ENCODE measurements at regions of chr5 and their contacts with region 1.

Region 1: GRCh38 chr5:174418928-174419796 is 305.2 kb upstream of the MSX2 start:
- DNase-seq: peak; percentile 69
- H3K4me3 ChIP-seq: peak overlapping the region; percentile 1 to 33 (median 6)
- H3K27ac ChIP-seq: no peak overlapping the region
- H3K4me1 ChIP-seq: no peaks in the 10 kb centered on the region
- H3K27me3 ChIP-seq: no peaks in the 10 kb centered on the region
- CTCF ChIP-seq: peak; percentile 89 to 98

Region 2: DNA sequence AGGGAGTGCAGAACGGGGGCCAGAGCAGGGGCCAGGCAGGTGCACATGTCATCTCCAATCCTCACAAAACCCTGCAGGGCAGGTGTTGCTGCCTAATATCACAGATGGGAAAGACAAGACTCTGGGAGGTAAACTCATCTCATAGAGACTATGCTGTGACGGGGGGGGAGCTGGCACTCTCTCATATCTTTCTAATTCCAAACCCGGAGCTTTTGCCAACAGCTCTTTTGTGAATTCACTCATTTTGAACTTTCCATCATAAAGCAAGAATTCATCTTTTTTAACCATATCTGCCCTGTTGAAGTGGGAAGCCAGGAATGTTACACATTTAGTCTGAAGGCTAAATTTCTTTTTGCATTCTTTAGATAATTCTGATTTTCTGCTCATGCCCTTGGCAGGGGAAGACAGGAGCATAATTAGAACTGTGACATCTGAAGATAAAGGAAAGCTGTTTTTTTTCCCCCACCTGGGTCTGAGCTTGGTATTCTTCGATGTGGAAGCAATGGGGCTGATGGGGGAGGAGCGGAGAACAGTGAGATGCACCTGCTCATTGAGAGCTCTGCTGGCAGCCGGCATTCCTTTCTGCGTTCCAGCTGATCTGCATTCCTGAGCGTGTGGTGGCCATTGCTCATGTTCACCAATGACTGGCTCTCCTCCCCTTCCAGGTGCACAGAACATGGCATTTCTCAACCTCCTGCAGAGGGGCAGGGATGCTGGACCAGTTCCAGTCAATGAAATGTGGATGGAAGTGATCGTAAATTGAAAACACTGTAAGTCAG is 214.4 kb before region 1 on chr5:
- CTCF ChIA-PET with region 1: no interaction called
- dilution Hi-C with region 1: no loop called
- in situ Hi-C with region 1: no loop called
- intact Hi-C with region 1: no loop called
- DNase-seq: peak; percentile 1
- H3K4me3 ChIP-seq: no peak overlapping the region
- H3K27ac ChIP-seq: no peak overlapping the region
- H3K4me1 ChIP-seq: no peaks in the 10 kb centered on the region
- H3K27me3 ChIP-seq: no peaks in the 10 kb centered on the region
- CTCF ChIP-seq: no peak

Region 3: DNA sequence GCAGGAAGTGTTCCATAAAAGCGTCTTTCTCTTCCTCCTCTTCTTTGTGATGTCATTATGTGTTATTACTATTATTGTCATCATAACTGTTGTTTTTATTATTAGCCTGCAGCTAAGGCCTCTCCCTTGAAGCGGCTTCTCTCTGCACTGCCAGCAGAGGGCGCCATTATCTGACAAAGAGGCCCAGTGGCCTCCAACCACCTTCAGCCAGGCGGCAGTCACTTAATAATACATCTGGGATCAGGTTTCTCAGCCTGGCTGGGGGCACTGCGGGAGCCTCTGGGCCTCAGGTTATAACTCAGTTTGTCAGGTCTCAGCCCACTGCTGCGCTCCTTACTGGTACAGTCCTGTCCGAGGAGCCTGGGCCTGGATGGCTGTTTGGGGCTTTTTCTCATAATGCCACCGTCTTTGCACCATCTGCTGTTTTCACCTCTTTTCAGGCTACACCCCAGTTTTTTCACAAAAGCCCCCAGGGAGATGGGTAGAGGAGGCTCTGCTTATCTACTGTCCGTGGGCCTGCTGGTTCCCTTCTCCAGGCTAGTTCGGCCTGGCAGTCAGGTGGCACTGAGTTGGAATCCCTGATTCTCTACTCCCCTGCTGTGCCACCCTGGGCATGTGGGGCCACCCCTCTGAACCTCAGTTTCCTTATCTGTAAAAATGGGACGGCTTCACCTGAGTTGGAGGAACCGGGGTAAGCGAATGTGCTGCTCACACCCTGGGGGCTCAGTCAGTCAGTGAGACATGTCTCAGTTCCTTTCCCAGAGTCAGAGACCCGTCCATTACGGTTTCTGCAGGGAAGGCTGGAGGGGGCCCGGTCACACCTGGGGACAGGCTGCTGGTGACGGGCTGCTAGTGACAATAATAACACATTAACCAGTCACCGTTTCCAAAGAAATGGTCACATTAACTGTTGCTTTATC is 91.6 kb before region 1 on chr5:
- CTCF ChIA-PET with region 1: no interaction called
- dilution Hi-C with region 1: no loop called
- in situ Hi-C with region 1: no loop called
- intact Hi-C with region 1: loop called (anchors 1 kb)
- DNase-seq: peak; percentile 56
- H3K4me3 ChIP-seq: no peak overlapping the region
- H3K27ac ChIP-seq: no peak overlapping the region
- H3K4me1 ChIP-seq: no peaks in the 10 kb centered on the region
- H3K27me3 ChIP-seq: no peaks in the 10 kb centered on the region
- CTCF ChIP-seq: peak; percentile 85 to 90

Region 4: DNA sequence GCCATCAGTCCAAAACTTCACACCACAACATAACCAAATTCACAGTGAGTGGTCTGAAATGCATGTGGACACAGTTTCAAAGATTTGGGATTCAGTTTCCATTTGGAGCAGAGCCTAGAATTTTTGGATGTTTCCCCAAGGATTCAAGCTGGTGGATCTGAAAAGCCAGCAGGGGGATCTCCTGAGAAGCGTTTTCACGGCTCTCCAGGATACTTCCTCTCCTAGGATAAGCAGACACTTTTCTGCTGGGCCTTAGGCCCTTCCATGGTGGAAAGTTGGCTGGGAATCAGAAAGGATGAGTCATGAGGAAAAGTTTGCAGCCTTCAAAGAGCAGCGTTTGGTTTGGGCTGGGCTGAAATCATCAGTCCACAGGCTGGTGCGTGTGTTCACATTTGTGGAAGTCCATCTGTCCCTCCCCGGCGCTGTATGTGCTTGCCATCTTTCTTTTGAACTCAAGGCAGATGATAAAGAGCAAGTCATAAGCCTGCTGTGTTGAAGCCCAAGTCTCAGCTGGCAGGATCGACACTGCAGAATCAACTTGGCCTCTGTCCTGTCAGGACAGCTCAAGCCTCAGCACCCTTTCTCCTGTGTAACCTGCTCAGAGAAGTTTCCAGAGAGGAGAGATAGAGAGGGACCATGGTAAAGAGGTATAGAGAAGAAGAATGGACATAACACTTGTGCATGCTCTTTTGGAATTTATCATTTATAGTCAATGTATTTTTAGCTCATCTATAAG is 152.7 kb after region 1 on chr5:
- CTCF ChIA-PET with region 1: no interaction called
- dilution Hi-C with region 1: no loop called
- in situ Hi-C with region 1: no loop called
- intact Hi-C with region 1: no loop called
- DNase-seq: peak; percentile 85
- H3K4me3 ChIP-seq: no peak overlapping the region
- H3K27ac ChIP-seq: peak overlapping the region; percentile 19
- H3K4me1 ChIP-seq: peaks cover 28% of the 10 kb centered on the region
- H3K27me3 ChIP-seq: no peaks in the 10 kb centered on the region
- CTCF ChIP-seq: peak in 1 of 2 donors; percentile 25

Region 5: GRCh38 chr5:174724491-174725260 is 305.5 kb after region 1 on chr5 and contains the start of gene MSX2:
- CTCF ChIA-PET with region 1: no interaction called
- dilution Hi-C with region 1: no loop called
- in situ Hi-C with region 1: loop called in 1 of 2 experiments (anchors 5 kb)
- intact Hi-C with region 1: no loop called
- DNase-seq: peak; percentile 88
- H3K4me3 ChIP-seq: peak within 1 kb of the TSS; percentile 73 to 91 (median 74)
- H3K27ac ChIP-seq: peak within 1 kb of the TSS; percentile 3
- H3K4me1 ChIP-seq: peaks cover 6% of the 10 kb centered on the region
- H3K27me3 ChIP-seq: peaks cover 18% of the 10 kb centered on the region
- CTCF ChIP-seq: no peak
- total RNA-seq, gene MSX2: 2.0 to 3.3 TPM

Region 6: GRCh38 chr5:174735498-174736330 is 316.6 kb after region 1 on chr5:
- CTCF ChIA-PET with region 1: interaction called, 4 read pairs
- dilution Hi-C with region 1: no loop called
- in situ Hi-C with region 1: loop called in 1 of 2 experiments (anchors 5 kb)
- intact Hi-C with region 1: loop called (anchors 1 kb)
- DNase-seq: no peak
- H3K4me3 ChIP-seq: peak overlapping the region; percentile 31 to 42 (median 36)
- H3K27ac ChIP-seq: no peak overlapping the region
- H3K4me1 ChIP-seq: peaks cover 8% of the 10 kb centered on the region
- H3K27me3 ChIP-seq: peaks cover 7% of the 10 kb centered on the region
- CTCF ChIP-seq: peak; percentile 70 to 82

Region 7: DNA sequence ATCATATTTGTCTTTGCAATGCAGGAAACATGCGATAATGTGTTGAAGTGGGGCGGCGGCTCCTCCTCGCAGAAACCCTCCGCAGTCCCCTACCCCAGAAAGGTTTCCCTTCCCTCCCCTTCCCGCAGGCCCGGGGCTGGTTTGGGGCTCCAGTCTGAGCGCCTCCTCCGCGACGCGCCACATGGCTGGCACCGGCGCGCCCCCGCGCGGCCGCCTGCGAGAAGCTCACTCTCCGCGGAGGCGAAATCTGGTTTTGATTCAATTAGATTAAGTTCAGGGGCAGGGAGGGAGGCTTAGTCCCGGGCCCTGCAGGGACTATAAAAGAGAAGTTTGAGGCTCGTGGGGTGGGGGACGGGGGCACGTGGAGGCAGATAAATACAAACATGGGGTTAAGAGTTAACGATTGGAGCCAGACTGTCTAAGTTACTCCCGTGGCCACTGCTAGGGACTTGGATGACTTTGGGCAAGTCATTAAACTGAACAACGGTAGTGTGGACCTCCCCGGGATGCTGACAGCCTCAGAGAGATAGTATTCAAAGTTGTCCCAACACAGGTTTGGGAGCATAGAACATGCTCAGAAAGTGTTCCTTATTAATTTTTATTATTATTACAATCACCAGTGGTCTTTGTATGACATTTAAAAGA is 374.6 kb after region 1 on chr5:
- CTCF ChIA-PET with region 1: interaction called, 9 read pairs
- dilution Hi-C with region 1: no loop called
- in situ Hi-C with region 1: loop called in 1 of 2 experiments (anchors 10 kb)
- intact Hi-C with region 1: loop called (anchors 1 kb)
- DNase-seq: peak; percentile 36
- H3K4me3 ChIP-seq: no peak overlapping the region
- H3K27ac ChIP-seq: no peak overlapping the region
- H3K4me1 ChIP-seq: no peaks in the 10 kb centered on the region
- H3K27me3 ChIP-seq: no peaks in the 10 kb centered on the region
- CTCF ChIP-seq: peak; percentile 68 to 95

Region 8: GRCh38 chr5:174935854-174936474 is 516.8 kb after region 1 on chr5:
- CTCF ChIA-PET with region 1: no interaction called
- dilution Hi-C with region 1: no loop called
- in situ Hi-C with region 1: no loop called
- intact Hi-C with region 1: loop called (anchors 1 kb)
- DNase-seq: peak; percentile 12
- H3K4me3 ChIP-seq: no peak overlapping the region
- H3K27ac ChIP-seq: no peak overlapping the region
- H3K4me1 ChIP-seq: no peaks in the 10 kb centered on the region
- H3K27me3 ChIP-seq: no peaks in the 10 kb centered on the region
- CTCF ChIP-seq: peak; percentile 93

Region 9: DNA sequence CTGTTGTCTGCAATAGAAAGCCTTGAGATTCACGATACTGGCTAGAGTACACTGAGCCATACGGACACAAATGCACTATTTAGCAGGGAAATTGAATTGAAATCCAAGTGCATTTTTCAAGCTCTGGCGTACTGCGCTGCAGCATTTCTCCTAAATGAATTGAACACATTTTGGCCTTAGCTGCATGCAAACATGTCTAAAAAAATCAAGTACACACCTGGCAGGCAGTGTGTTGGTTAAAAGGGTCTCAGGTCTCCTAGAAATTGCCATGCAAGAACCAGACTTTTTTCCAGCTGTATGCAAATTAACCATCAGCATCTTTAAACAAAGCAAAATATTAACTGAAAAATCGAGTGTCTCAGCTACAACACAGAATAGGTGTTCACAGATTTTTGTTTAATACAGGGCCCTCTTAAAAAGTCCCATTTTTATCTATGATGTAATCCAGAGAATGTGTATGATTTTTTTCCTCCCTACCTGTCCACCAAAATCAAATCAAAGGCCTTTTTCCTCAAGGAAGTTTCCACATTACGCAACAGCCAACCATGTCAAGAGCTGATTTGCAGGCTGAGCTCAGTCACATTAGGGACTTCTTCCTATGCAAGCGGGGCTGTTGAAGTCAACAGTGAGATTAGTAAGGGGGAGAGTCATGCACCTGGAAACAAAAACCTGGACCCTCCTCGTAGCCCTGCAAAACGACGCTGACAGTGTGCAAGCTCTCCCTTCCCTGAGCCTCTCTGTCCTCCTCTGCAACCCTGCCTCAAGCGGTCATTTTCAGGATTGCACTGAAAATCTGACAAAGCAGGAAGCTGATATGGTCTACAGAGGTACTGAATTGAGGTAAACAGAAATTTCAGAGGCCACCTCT is 1045.1 kb after region 1 on chr5:
- CTCF ChIA-PET with region 1: no interaction called
- dilution Hi-C with region 1: no loop called
- in situ Hi-C with region 1: no loop called
- intact Hi-C with region 1: loop called (anchors 10 kb)
- DNase-seq: peak; percentile 40
- H3K4me3 ChIP-seq: no peak overlapping the region
- H3K27ac ChIP-seq: no peak overlapping the region
- H3K4me1 ChIP-seq: peaks cover 12% of the 10 kb centered on the region
- H3K27me3 ChIP-seq: no peaks in the 10 kb centered on the region
- CTCF ChIP-seq: peak; percentile 48 to 70

Measured in mammary epithelial cell (primary cell).